Panc1 (cell line): ENCODE measurements at regions of chr7 and their contacts with region 1.

Region 1: DNA sequence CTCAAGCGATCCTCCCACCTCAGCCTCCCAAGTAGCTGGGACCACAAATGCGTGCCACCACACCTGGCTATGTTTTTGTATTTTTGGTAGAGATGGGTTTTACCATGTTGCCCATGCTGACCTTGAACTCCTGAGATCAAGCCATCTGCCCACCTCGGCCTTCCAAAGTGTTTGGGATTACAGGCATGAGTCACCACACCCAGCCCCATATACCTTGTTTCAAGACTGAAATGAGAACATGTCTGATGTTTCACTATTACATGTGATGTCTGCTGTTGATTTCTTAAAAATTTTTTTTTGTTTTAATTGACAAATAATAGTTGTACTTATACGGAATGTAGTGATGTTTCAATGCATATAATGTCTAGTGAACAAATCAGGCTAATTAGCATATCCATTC is 14.5 kb downstream of the KLHL7 start:
- DNase-seq: no peak
- ATAC-seq: no peak
- H3K4me3 ChIP-seq: no peak overlapping the region
- H3K27ac ChIP-seq: no peak overlapping the region
- H3K4me1 ChIP-seq: no peaks in the 10 kb centered on the region
- H3K27me3 ChIP-seq: no peaks in the 10 kb centered on the region
- CTCF ChIP-seq: no peak

Region 2: GRCh38 chr7:23061327-23061726 is 58.8 kb before region 1 on chr7:
- CTCF ChIA-PET with region 1: no interaction called
- POLR2A ChIA-PET with region 1: interaction called, 14 read pairs
- in situ Hi-C with region 1: no loop called
- intact Hi-C with region 1: no loop called
- DNase-seq: no peak
- ATAC-seq: no peak
- H3K4me3 ChIP-seq: no peak overlapping the region
- H3K27ac ChIP-seq: no peak overlapping the region
- H3K4me1 ChIP-seq: no peaks in the 10 kb centered on the region
- H3K27me3 ChIP-seq: no peaks in the 10 kb centered on the region
- CTCF ChIP-seq: no peak

Region 3: DNA sequence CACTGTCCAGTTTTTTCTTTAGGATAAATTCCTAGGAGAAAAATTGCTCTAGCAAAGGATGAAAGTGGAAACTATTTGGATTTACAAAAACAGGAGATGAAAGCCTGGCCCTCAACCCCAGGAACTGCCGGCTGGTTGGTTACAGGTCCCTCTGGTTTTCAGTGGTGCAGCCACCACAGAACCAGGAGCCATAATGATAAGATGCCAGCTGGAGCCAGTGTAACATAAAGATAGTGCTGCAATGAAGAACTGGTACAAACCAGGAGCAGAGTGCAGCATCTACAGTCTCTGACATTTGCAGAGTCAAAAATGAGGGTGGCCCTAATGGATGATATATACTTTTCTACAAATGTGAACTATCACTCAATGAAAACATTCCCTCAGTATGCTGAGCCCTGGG is 41.4 kb after region 1 on chr7:
- CTCF ChIA-PET with region 1: no interaction called
- POLR2A ChIA-PET with region 1: no interaction called
- in situ Hi-C with region 1: no loop called
- intact Hi-C with region 1: no loop called
- DNase-seq: no peak
- ATAC-seq: no peak
- H3K4me3 ChIP-seq: no peak overlapping the region
- H3K27ac ChIP-seq: no peak overlapping the region
- H3K4me1 ChIP-seq: no peaks in the 10 kb centered on the region
- H3K27me3 ChIP-seq: no peaks in the 10 kb centered on the region
- CTCF ChIP-seq: no peak

Region 4: DNA sequence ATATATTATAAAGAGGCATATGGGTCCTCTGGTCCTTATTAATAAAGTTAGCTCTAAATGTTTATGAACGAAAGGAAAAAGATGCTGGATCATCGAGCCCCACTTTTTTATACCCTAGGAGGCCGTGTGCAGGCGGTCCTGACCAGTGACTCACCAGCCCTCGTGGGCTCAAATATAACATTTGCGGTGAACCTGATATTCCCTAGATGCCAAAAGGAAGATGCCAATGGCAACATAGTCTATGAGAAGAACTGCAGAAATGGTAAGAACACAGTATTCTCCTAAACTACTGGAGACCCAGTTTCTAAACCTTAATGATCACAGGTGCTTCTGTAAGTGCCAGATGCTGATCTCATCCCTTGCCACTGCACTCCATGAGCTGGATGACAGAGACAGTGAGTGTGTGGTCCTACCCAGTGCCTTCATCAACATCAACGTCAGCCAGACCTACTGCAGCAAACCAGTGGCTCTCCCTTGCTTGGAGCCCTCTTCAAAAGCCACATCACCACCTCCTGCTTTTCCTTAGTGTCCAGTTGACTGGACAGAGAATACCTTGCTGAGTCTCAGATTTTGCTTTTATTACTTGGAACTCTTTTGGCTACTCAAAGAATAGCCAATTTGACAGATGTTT is 134.1 kb after region 1 on chr7:
- CTCF ChIA-PET with region 1: no interaction called
- POLR2A ChIA-PET with region 1: no interaction called
- in situ Hi-C with region 1: no loop called
- intact Hi-C with region 1: no loop called
- DNase-seq: no peak
- ATAC-seq: no peak
- H3K4me3 ChIP-seq: no peak overlapping the region
- H3K27ac ChIP-seq: no peak overlapping the region
- H3K4me1 ChIP-seq: no peaks in the 10 kb centered on the region
- H3K27me3 ChIP-seq: peaks cover 5% of the 10 kb centered on the region; the same call in 1 of the 2 replicates
- CTCF ChIP-seq: no peak

Region 5: DNA sequence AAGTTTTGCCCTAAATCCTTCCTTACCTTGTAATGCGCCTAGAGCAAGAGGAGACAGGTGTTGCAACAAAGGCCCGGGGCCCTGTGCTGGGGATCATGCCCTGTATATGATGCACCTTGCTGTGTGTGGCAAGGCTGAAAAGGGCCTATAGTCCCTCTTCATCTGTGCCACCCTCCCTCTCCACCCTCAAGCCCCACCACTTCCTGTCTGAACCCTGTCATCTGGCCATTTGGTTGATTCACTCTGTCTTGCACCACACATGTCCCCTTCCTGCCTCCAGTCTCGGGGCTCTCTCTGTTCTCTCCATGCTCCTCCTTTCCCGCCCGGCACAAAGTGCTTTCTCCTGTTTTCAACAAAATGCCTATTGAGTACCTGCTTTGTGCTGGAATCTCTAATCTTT is 167.5 kb after region 1 on chr7:
- CTCF ChIA-PET with region 1: no interaction called
- POLR2A ChIA-PET with region 1: no interaction called
- in situ Hi-C with region 1: no loop called
- intact Hi-C with region 1: no loop called
- DNase-seq: no peak
- ATAC-seq: no peak
- H3K4me3 ChIP-seq: no peak overlapping the region
- H3K27ac ChIP-seq: no peak overlapping the region
- H3K4me1 ChIP-seq: no peaks in the 10 kb centered on the region
- H3K27me3 ChIP-seq: no peaks in the 10 kb centered on the region
- CTCF ChIP-seq: no peak